ENCODE measurements at regions of chr3 and their contacts with region 1.

Region 1: GRCh38 chr3:44976002-44976815 is at the starts of genes EXOSC7 and ZDHHC3:
- DNase-seq: peak; percentile 85
- ATAC-seq: peak; percentile 68
- H3K4me3 ChIP-seq: peak within 1 kb of the TSS; percentile 76
- H3K27ac ChIP-seq: peak within 1 kb of the TSS; percentile 69
- H3K4me1 ChIP-seq: peaks cover 41% of the 10 kb centered on the region
- H3K27me3 ChIP-seq: no peaks in the 10 kb centered on the region
- CTCF ChIP-seq: no peak
- total RNA-seq, gene EXOSC7: 79.8 and 81.5 TPM in 2 replicates
- total RNA-seq, gene ZDHHC3: 122 and 153 TPM in 2 replicates

Region 2: GRCh38 chr3:44942202-44942921 is 33.8 kb before region 1 on chr3:
- CTCF ChIA-PET with region 1: no interaction called
- POLR2A ChIA-PET with region 1: interaction called, 4 read pairs
- intact Hi-C with region 1: loop called (anchors 5 kb)
- DNase-seq: peak; percentile 81
- ATAC-seq: peak; percentile 99
- H3K4me3 ChIP-seq: no peak overlapping the region
- H3K27ac ChIP-seq: peak overlapping the region; percentile 44
- H3K4me1 ChIP-seq: peaks cover 15% of the 10 kb centered on the region
- H3K27me3 ChIP-seq: no peaks in the 10 kb centered on the region
- CTCF ChIP-seq: no peak

Region 3: GRCh38 chr3:44992555-44993470 is 16.6 kb after region 1 on chr3:
- CTCF ChIA-PET with region 1: interaction called, 12 read pairs
- POLR2A ChIA-PET with region 1: interaction called, 5 read pairs
- intact Hi-C with region 1: no loop called
- DNase-seq: peak; percentile 38
- ATAC-seq: no peak
- H3K4me3 ChIP-seq: no peak overlapping the region
- H3K27ac ChIP-seq: peak overlapping the region; percentile 68
- H3K4me1 ChIP-seq: peaks cover 42% of the 10 kb centered on the region
- H3K27me3 ChIP-seq: no peaks in the 10 kb centered on the region
- CTCF ChIP-seq: peak; percentile 89

Region 4: GRCh38 chr3:45026957-45027356 is 50.7 kb after region 1 on chr3:
- CTCF ChIA-PET with region 1: no interaction called
- POLR2A ChIA-PET with region 1: no interaction called
- intact Hi-C with region 1: no loop called
- DNase-seq: no peak
- ATAC-seq: no peak
- H3K4me3 ChIP-seq: no peak overlapping the region
- H3K27ac ChIP-seq: no peak overlapping the region
- H3K4me1 ChIP-seq: 0 out of 2 replicates have a peak, but pooled peaks cover 7% of the 10 kb centered on the region
- H3K27me3 ChIP-seq: no peaks in the 10 kb centered on the region
- CTCF ChIP-seq: no peak

Measured in PC-3 (cell line).